ENCODE measurements at regions of chr1 and their contacts with region 1.

Region 1: GRCh38 chr1:58528518-58528917 is 18.0 kb downstream of the OMA1 start:
- DNase-seq: no peak
- H3K4me3 ChIP-seq: no peak overlapping the region
- H3K27ac ChIP-seq: no peak overlapping the region
- H3K4me1 ChIP-seq: peaks cover 40% of the 10 kb centered on the region
- CTCF ChIP-seq: no peak

Region 2: DNA sequence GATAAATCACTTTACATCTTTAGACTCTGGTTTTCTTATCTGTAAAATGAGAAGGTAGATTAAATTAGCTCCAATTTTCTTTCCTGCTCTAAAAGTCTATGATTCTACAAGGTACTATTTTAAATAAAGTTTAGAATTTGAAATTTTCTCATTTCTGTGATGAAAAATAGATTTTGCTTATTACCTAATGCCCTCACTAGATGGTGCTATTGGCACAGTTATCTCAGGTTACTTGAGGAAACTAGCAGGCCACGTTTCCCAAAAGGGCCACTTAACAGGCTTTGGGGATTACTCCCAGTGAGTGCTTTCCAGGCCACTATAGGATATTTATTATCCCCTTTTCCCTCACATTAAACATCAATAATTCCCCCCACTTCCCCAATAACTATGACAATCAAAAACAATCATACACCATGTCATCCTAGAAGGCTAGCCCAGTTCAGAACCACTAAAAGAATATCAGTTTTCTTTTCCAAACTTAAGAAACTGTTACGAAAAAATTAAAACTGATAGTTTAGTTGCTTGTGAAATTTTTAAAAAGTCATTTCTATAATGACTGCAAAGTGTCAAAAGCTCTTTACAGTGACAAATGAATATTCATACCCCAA is 12.6 kb before region 1 on chr1:
- CTCF ChIA-PET with region 1: no interaction called
- POLR2A ChIA-PET with region 1: interaction called, 14 read pairs
- intact Hi-C with region 1: no loop called
- DNase-seq: peak; percentile 78
- H3K4me3 ChIP-seq: no peak overlapping the region
- H3K27ac ChIP-seq: no peak overlapping the region
- H3K4me1 ChIP-seq: no peaks in the 10 kb centered on the region
- CTCF ChIP-seq: peak; percentile 91

Region 3: DNA sequence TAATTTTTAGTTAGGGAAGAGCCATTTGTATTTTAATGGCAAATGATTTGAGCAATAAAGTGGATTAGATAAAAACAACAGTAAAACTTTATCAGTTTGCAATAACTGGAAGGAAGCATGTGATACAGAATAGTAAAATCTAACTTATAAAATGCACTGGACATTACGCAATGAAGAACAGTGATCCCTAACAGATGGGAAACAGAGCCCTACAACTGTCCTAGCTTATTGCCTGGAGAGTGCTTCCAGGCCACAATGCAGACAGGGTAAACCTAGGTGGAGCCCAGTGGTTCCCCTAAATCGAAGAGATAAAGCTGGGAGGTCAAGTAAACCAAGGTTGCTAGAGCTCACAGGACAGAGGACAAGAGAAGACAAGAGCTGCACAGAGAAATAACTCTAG is 11.0 kb after region 1 on chr1:
- CTCF ChIA-PET with region 1: no interaction called
- POLR2A ChIA-PET with region 1: interaction called, 24 read pairs
- intact Hi-C with region 1: no loop called
- DNase-seq: no peak
- H3K4me3 ChIP-seq: no peak overlapping the region
- H3K27ac ChIP-seq: no peak overlapping the region
- H3K4me1 ChIP-seq: no peaks in the 10 kb centered on the region
- CTCF ChIP-seq: no peak

Region 4: GRCh38 chr1:58584082-58584895 is 55.8 kb after region 1 on chr1:
- CTCF ChIA-PET with region 1: no interaction called
- POLR2A ChIA-PET with region 1: no interaction called
- intact Hi-C with region 1: no loop called
- DNase-seq: no peak
- H3K4me3 ChIP-seq: no peak overlapping the region
- H3K27ac ChIP-seq: no peak overlapping the region
- H3K4me1 ChIP-seq: no peaks in the 10 kb centered on the region
- CTCF ChIP-seq: no peak

Measured in OCI-LY7 (cell line).